ENCODE measurements at regions of chr13 and their contacts with region 1.

Region 1: DNA sequence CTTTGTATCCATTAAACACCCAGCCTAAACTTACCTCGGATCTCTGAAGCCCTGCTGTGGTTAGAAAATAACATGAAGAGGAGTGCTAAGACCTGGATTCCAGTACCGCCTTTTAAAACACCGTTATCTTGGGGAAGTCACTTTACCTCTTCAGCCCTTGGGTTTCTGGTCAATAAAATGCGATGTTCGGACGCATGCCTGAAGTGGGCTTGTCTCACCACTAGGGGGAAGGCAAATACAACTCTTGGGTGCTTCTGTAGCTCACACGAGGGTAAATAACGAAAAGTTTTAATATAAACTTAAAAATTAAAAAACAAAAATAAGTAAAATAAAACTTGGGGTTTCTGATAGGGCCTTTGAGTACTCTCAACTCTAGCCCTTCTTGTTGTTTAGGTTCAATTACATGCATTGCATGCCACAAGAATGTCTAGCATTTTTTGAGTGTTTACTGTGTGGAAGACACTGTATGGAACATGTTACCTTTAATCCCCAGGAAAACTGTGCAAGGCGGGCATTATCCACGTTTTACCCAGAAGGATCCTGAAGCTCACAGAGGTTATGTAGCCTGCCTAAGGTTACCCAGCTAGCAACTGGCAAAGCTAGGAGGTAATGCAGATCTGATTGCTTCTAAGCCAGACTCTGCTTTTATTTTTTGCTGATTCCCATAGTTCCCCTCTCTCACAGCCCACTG is 240.4 kb downstream of the LMO7 start:
- DNase-seq: no peak
- H3K4me3 ChIP-seq: no peak overlapping the region
- H3K27ac ChIP-seq: no peak overlapping the region
- H3K4me1 ChIP-seq: peaks cover 0 to 14% (median 4%) of the 10 kb centered on the region in 3 donors
- H3K27me3 ChIP-seq: no peaks in the 10 kb centered on the region
- CTCF ChIP-seq: peak; percentile 70 to 94 (median 87)
- POLR2A ChIP-seq: no peak

Region 2: GRCh38 chr13:75691183-75691582 is 185.3 kb before region 1 on chr13:
- intact Hi-C with region 1: loop called (anchors 10 kb)
- DNase-seq: no peak
- H3K4me3 ChIP-seq: no peak overlapping the region
- H3K27ac ChIP-seq: peak overlapping the region in 1 of 4 donors; percentile 3
- H3K4me1 ChIP-seq: peaks cover 0 to 21% (median 3%) of the 10 kb centered on the region in 3 donors
- H3K27me3 ChIP-seq: no peaks in the 10 kb centered on the region
- CTCF ChIP-seq: no peak
- POLR2A ChIP-seq: no peak

Region 3: GRCh38 chr13:76016799-76017400 is 140.4 kb after region 1 on chr13:
- intact Hi-C with region 1: loop called (anchors 10 kb)
- DNase-seq: no peak
- H3K4me3 ChIP-seq: no peak overlapping the region
- H3K27ac ChIP-seq: no peak overlapping the region
- H3K4me1 ChIP-seq: peaks cover 0 to 5% (median 0%) of the 10 kb centered on the region in 3 donors
- H3K27me3 ChIP-seq: no peaks in the 10 kb centered on the region
- CTCF ChIP-seq: peak in 4 of 6 experiments; percentile 17 to 55 (median 32)
- POLR2A ChIP-seq: no peak

Region 4: GRCh38 chr13:76473552-76474134 is 597.1 kb after region 1 on chr13:
- intact Hi-C with region 1: loop called (anchors 5 kb)
- DNase-seq: no peak
- H3K4me3 ChIP-seq: no peak overlapping the region
- H3K27ac ChIP-seq: no peak overlapping the region
- H3K4me1 ChIP-seq: peaks cover 0 to 4% (median 0%) of the 10 kb centered on the region in 3 donors
- H3K27me3 ChIP-seq: no peaks in the 10 kb centered on the region
- CTCF ChIP-seq: peak; percentile 36 to 90 (median 82)
- POLR2A ChIP-seq: no peak

Region 5: DNA sequence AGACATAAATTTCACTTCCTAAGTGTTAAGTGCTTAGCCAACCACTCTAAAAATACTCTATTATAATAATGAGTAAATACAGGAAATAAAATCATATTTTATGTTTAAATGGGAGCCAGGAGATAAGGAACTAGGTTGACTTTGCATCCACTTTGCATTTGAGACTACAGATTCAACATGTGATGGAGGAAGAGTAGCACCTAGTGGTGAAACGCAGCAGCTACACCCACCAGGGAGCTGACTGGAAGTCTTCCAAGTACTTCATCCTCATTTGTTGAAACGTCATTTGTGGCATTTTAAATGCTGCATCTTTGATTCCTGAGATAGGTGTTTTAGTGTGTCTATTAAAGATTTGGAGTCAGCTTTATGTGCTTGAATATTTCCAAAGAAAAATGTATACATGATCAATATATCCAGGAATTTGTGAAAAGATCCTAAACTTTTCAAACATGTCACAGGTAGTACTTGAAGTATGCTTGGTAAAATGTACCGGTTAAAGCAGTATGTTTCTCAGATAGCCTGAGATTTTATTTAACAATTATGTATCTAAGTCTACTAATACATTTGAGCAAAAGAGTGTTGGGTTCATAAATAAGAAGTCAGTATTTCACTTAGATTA is 1027.1 kb after region 1 on chr13:
- intact Hi-C with region 1: loop called (anchors 10 kb)
- DNase-seq: no peak
- H3K4me3 ChIP-seq: no peak overlapping the region
- H3K27ac ChIP-seq: no peak overlapping the region
- H3K4me1 ChIP-seq: no peaks in the 10 kb centered on the region
- H3K27me3 ChIP-seq: no peaks in the 10 kb centered on the region
- CTCF ChIP-seq: peak; percentile 72 to 98 (median 96)
- POLR2A ChIP-seq: no peak